GM12878 (cell line): ENCODE measurements at regions of chr16 and their contacts with region 1.

Region 1: GRCh38 chr16:67226804-67227557 is at the start of gene TMEM208:
- DNase-seq: peak; percentile 97
- ATAC-seq: peak; percentile 99
- H3K4me3 ChIP-seq: peak within 1 kb of the TSS; percentile 87
- H3K27ac ChIP-seq: peak within 1 kb of the TSS; percentile 74
- H3K4me1 ChIP-seq: peaks cover 12% of the 10 kb centered on the region
- H3K27me3 ChIP-seq: no peaks in the 10 kb centered on the region
- CTCF ChIP-seq: peak; percentile 10 to 18 (median 14); a peak in 3 of 6 replicates
- EP300 ChIP-seq: no peak
- POLR2A ChIP-seq: peak; percentile 88
- RAD21 ChIP-seq: no peak
- polyA plus RNA-seq, gene TMEM208: 169 to 244 TPM

Region 2: DNA sequence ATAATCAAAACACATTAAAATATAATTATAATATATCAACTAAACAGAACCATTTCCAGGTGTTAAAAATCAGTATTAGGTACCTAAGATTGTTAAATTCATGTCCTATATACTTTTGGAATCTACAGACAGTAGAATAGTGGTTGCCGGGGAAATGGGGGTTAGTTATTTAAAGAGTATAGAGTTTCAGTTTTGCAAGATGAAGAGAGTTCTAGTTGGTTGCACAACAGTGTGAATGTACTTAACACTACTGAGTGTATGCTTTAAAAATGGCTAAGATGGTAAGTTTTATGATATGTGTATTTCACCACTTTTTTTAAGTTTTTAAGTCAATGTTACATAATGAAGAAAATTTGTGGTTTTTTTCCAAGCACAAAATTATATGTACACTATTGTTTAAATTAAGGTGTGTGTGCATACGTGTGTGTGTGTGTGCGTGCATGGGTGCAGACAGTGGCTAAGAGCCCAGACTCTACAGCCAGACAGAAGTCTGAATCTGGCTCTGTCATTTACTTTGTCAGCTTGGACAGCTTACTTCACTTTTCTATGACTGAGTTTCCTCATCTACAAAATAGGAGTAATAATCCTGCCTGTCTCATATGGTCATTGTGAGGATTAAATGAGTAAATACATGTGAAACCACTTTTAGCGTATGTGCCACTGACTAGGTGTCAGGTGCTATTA is 142.5 kb before region 1 on chr16:
- CTCF ChIA-PET with region 1: no interaction called
- POLR2A ChIA-PET with region 1: interaction called, 11 read pairs
- RAD21 ChIA-PET with region 1: no interaction called
- SMC1A ChIA-PET with region 1: no interaction called
- in situ Hi-C with region 1: no loop called
- intact Hi-C with region 1: no loop called
- DNase-seq: no peak
- ATAC-seq: peak; percentile 96
- H3K4me3 ChIP-seq: no peak overlapping the region
- H3K27ac ChIP-seq: no peak overlapping the region; the same call in 1 of the 2 replicates
- H3K4me1 ChIP-seq: peaks cover 26% of the 10 kb centered on the region
- H3K27me3 ChIP-seq: no peaks in the 10 kb centered on the region
- CTCF ChIP-seq: no peak
- EP300 ChIP-seq: no peak
- POLR2A ChIP-seq: no peak
- RAD21 ChIP-seq: no peak

Region 3: GRCh38 chr16:67109407-67110135 is 117.4 kb before region 1 on chr16 and contains the start of gene PHAF1:
- CTCF ChIA-PET with region 1: no interaction called
- POLR2A ChIA-PET with region 1: no interaction called
- RAD21 ChIA-PET with region 1: no interaction called
- SMC1A ChIA-PET with region 1: no interaction called
- in situ Hi-C with region 1: no loop called
- intact Hi-C with region 1: no loop called
- DNase-seq: peak; percentile 76
- ATAC-seq: peak; percentile 95
- H3K4me3 ChIP-seq: peak within 1 kb of the TSS; percentile 95
- H3K27ac ChIP-seq: peak within 1 kb of the TSS; percentile 13; the same call in 1 of the 2 replicates
- H3K4me1 ChIP-seq: peaks cover 17% of the 10 kb centered on the region
- H3K27me3 ChIP-seq: no peaks in the 10 kb centered on the region
- CTCF ChIP-seq: no peak
- EP300 ChIP-seq: no peak
- POLR2A ChIP-seq: peak; percentile 83
- RAD21 ChIP-seq: no peak
- polyA plus RNA-seq, gene PHAF1: 4.5 to 6.1 TPM

Region 4: DNA sequence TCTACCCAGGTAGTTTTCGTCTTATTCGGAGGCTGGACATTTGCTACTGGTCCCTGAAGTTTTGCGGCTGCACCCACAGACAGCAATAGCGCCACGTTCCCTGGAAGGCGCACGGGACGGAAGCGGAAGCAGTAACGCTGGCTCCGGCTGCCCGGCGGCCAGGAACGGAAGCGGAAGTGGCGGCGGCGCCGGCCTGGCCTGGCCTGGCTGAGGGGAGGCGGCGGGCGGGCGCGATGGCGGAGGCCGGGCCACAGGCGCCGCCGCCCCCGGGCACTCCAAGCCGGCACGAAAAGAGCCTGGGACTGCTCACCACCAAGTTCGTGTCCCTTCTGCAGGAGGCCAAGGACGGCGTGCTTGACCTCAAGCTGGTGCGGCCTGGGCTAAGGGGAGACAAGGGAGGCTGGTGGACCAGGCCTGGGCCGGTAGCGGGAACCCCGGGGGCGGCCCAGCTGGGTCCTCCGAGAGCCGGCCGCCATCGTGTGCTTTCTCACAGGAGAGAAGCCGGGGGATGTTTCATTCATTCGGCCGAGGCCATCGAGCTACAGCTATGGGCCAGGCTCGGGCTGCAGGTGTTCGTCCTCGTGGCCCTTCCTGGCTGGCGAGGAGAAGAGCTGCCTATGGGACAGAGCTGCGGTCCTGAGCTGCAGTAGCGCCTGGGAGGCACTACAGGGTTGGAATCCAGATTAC is 34.8 kb before region 1 on chr16 and contains the start of gene E2F4:
- CTCF ChIA-PET with region 1: interaction called, 7 read pairs
- POLR2A ChIA-PET with region 1: interaction called, 22 read pairs
- RAD21 ChIA-PET with region 1: interaction called, 6 read pairs
- SMC1A ChIA-PET with region 1: no interaction called
- in situ Hi-C with region 1: no loop called
- intact Hi-C with region 1: no loop called
- DNase-seq: peak; percentile 66
- ATAC-seq: peak; percentile 98
- H3K4me3 ChIP-seq: peak within 1 kb of the TSS; percentile 99
- H3K27ac ChIP-seq: peak within 1 kb of the TSS; percentile 79
- H3K4me1 ChIP-seq: peaks cover 8% of the 10 kb centered on the region
- H3K27me3 ChIP-seq: no peaks in the 10 kb centered on the region
- CTCF ChIP-seq: no peak
- EP300 ChIP-seq: no peak
- POLR2A ChIP-seq: peak; percentile 84
- RAD21 ChIP-seq: no peak
- polyA plus RNA-seq, gene E2F4: 11.7 to 16.5 TPM

Region 5: GRCh38 chr16:67198238-67198734 is 28.7 kb before region 1 on chr16:
- CTCF ChIA-PET with region 1: interaction called, 13 read pairs
- POLR2A ChIA-PET with region 1: interaction called, 22 read pairs
- RAD21 ChIA-PET with region 1: interaction called, 6 read pairs
- SMC1A ChIA-PET with region 1: interaction called, 4 read pairs
- in situ Hi-C with region 1: no loop called
- intact Hi-C with region 1: no loop called
- DNase-seq: no peak
- ATAC-seq: peak; percentile 81
- H3K4me3 ChIP-seq: no peak overlapping the region
- H3K27ac ChIP-seq: no peak overlapping the region
- H3K4me1 ChIP-seq: peaks cover 4% of the 10 kb centered on the region; the same call in 1 of the 2 replicates
- H3K27me3 ChIP-seq: no peaks in the 10 kb centered on the region
- CTCF ChIP-seq: peak; percentile 39 to 64 (median 59); a peak in 5 of 6 replicates
- EP300 ChIP-seq: no peak
- POLR2A ChIP-seq: peak; percentile 52; the same call in 1 of the 2 replicates
- RAD21 ChIP-seq: no peak